Activated naive CD4-positive, alpha-beta T cell treated with anti-CD3 and anti-CD28 coated beads for 36 hours (primary cell): ENCODE measurements at regions of chr1 and their contacts with region 1.

Region 1: GRCh38 chr1:12161662-12162458 is 4.9 kb upstream of the TNFRSF1B start:
- DNase-seq: peak; percentile 92
- H3K4me3 Mint-ChIP-seq: no peak overlapping the region
- H3K27ac Mint-ChIP-seq: peak overlapping the region; percentile 83
- H3K4me1 Mint-ChIP-seq: peaks cover 70% of the 10 kb centered on the region
- H3K27me3 Mint-ChIP-seq: no peaks in the 10 kb centered on the region

Region 2: GRCh38 chr1:12059722-12060464 is 102.0 kb before region 1 on chr1:
- CTCF ChIA-PET with region 1: no interaction called
- intact Hi-C with region 1: loop called (anchors 2 kb)
- DNase-seq: peak; percentile 81
- H3K4me3 Mint-ChIP-seq: peak overlapping the region; percentile 2
- H3K27ac Mint-ChIP-seq: peak overlapping the region; percentile 38
- H3K4me1 Mint-ChIP-seq: peaks cover 60% of the 10 kb centered on the region
- H3K27me3 Mint-ChIP-seq: peaks cover 22% of the 10 kb centered on the region

Region 3: DNA sequence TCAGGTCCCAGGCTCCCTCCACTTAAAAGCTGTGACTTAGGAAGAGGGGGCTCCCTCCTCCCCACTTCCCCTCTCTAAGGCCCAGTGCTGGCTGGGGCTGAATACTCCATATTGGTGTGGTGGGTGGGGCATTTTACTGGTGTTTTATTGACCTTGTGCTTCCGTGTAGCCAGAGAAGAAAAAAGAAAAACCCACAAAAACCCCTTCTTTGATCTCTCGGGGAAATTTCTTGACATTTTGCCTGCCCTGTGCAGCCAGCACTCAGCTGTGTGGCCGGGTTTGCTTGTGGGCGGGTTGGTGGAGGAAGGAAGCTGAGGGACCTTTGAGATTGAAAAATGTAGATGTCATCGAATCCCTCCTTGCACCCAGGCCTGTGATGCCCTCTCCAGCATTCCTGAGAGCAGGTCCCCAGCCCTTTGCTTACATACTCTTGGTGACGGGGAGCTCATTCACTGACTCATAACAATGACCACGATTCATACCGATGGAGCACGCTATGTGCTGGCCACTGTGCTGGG is 74.0 kb before region 1 on chr1:
- CTCF ChIA-PET with region 1: no interaction called
- intact Hi-C with region 1: no loop called
- DNase-seq: peak; percentile 77
- H3K4me3 Mint-ChIP-seq: no peak overlapping the region
- H3K27ac Mint-ChIP-seq: peak overlapping the region; percentile 76
- H3K4me1 Mint-ChIP-seq: peaks cover 34% of the 10 kb centered on the region
- H3K27me3 Mint-ChIP-seq: no peaks in the 10 kb centered on the region

Region 4: DNA sequence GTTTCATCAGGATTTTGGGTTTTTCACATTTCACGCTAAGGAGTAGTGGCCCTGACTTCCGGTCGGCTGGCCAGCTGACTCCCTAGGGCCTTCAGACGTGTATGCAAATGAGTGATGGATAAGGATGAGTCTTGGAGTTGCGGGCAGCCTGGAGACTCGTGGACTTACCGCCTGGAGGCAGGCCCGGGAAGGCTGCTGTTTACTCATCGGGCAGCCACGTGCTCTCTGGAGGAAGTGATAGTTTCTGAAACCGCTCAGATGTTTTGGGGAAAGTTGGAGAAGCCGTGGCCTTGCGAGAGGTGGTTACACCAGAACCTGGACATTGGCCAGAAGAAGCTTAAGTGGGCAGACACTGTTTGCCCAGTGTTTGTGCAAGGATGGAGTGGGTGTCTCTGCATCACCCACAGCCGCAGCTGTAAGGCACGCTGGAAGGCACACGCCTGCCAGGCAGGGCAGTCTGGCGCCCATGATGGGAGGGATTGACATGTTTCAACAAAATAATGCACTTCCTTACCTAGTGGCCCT is 18.2 kb before region 1 on chr1:
- CTCF ChIA-PET with region 1: no interaction called
- intact Hi-C with region 1: no loop called
- DNase-seq: peak; percentile 69
- H3K4me3 Mint-ChIP-seq: no peak overlapping the region
- H3K27ac Mint-ChIP-seq: peak overlapping the region; percentile 76
- H3K4me1 Mint-ChIP-seq: peaks cover 50% of the 10 kb centered on the region
- H3K27me3 Mint-ChIP-seq: no peaks in the 10 kb centered on the region

Region 5: DNA sequence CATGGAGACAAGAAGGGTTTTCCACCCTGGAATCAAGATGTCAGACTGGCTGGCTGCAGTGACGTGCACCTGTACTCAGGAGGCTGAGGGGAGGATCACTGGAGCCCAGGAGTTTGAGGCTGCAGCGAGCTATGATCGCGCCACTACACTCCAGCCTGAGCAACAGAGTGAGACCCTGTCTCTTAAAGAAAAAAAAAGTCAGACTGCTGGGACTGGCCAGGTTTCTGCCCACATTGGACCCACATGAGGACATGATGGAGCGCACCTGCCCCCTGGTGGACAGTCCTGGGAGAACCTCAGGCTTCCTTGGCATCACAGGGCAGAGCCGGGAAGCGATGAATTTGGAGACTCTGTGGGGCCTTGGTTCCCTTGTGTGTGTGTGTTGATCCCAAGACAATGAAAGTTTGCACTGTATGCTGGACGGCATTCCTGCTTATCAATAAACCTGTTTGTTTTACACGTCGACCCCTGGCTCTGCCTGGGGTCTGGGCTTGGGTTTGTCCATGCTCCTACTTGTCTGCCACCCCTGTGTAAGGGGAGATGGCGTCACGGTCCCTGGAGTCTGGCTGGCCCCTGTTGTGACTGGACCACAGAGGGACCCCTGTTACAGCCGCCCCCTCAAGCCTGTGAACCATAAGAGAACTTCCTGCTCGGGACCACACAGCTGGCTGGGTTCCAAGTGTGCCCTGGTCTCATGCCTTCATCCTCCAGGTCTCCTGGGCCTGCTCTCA is 47.1 kb after region 1 on chr1:
- CTCF ChIA-PET with region 1: no interaction called
- intact Hi-C with region 1: loop called (anchors 2 kb)
- DNase-seq: peak; percentile 95
- H3K4me3 Mint-ChIP-seq: no peak overlapping the region
- H3K27ac Mint-ChIP-seq: peak overlapping the region; percentile 37
- H3K4me1 Mint-ChIP-seq: peaks cover 42% of the 10 kb centered on the region
- H3K27me3 Mint-ChIP-seq: no peaks in the 10 kb centered on the region

Region 6: DNA sequence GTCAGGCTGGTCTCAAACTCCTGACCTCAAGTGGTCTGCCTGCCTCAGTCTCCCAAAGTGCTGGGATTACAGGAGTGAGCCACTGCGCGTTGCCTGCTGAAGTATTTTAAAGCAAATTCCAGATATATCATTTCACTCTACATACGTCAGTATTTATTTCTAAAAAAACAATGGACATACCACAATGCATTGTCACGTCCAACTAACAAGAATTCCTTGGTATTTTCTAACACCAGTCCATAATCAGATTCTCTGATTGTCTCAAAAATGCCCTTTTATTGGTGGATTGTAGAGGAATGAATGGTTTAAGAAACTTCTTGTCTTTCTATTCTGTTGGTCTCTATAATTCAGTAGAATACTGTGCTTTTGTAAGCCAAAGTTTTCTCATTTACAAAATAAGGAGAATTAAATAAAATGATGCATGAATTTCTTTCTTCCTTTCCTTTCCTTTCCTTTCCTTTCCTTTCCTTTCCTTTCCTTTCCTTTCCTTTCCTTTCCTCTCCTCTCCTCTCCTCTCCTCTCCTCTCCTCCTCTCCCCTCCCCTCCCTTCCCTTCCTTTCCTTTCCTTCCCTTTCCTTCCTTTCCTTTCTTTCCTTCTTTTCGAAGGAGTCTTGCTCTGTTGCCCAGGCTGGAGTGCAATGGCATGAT is 123.8 kb after region 1 on chr1:
- CTCF ChIA-PET with region 1: no interaction called
- intact Hi-C with region 1: no loop called
- DNase-seq: no peak
- H3K4me3 Mint-ChIP-seq: no peak overlapping the region
- H3K27ac Mint-ChIP-seq: no peak overlapping the region
- H3K4me1 Mint-ChIP-seq: peaks cover 13% of the 10 kb centered on the region
- H3K27me3 Mint-ChIP-seq: no peaks in the 10 kb centered on the region